ENCODE measurements at regions of chr9 and their contacts with region 1.

Region 1: GRCh38 chr9:130866474-130866965 is 30.1 kb downstream of the QRFP start:
- DNase-seq: peak; percentile 42
- H3K4me3 ChIP-seq: peak overlapping the region; percentile 45
- CTCF ChIP-seq: peak; percentile 84

Region 2: GRCh38 chr9:130693426-130694191 is 172.9 kb before region 1 on chr9 and contains the start of gene EXOSC2:
- CTCF ChIA-PET with region 1: interaction called, 786 read pairs
- POLR2A ChIA-PET with region 1: no interaction called
- DNase-seq: peak; percentile 88
- H3K4me3 ChIP-seq: peak within 1 kb of the TSS; percentile 86
- CTCF ChIP-seq: no peak

Region 3: GRCh38 chr9:130756037-130756436 is 110.5 kb before region 1 on chr9:
- CTCF ChIA-PET with region 1: interaction called, 18 read pairs
- POLR2A ChIA-PET with region 1: no interaction called
- DNase-seq: no peak
- H3K4me3 ChIP-seq: no peak overlapping the region
- CTCF ChIP-seq: no peak

Region 4: GRCh38 chr9:130824643-130825350 is 41.7 kb before region 1 on chr9:
- CTCF ChIA-PET with region 1: interaction called, 13 read pairs
- POLR2A ChIA-PET with region 1: no interaction called
- DNase-seq: no peak
- H3K4me3 ChIP-seq: peak overlapping the region; percentile 13; the same call in 1 of the 2 replicates
- CTCF ChIP-seq: no peak

Region 5: GRCh38 chr9:130884980-130885696 is 18.6 kb after region 1 on chr9:
- CTCF ChIA-PET with region 1: interaction called, 164 read pairs
- POLR2A ChIA-PET with region 1: no interaction called
- DNase-seq: no peak
- H3K4me3 ChIP-seq: no peak overlapping the region
- CTCF ChIP-seq: no peak

Region 6: DNA sequence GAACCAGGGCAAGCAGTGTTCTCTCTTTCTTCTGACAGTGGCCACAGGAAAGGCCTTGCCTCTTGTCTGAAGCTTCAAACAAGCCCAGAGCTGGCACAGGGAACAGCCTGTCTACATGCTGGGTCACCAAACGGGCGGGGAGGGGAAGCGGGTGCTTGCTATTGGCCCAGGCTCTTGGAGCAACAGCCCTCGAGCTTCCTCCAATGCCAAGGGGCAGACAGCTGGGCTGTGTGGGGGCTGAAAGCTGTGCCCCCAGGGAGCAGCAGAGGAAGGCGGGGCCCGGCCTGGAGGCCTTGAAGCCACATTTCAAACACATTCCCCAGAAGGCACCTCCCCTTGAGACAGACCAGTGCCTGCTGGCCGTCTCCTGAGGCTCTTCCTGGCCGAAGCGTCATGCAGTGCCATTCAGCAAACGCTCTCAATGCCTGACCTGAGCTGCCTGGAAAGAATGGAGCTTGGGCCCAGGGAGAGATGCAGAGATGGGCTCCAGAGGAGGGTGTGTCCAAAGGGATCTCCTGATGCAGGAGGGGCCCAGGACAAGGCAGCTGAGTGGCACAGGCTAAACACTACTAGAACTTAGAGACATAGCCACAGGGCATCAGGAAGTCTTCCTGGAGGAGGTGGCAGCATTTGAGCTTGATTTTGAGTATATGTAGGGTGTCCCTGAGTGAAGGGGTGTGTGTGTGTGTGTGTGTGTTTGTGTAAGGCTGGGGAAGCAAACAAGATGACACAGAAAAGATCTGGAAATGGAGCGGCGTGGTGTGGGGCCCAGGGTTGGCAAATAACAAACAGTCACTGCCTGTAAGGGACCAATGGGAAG is 70.0 kb after region 1 on chr9:
- CTCF ChIA-PET with region 1: interaction called, 24 read pairs
- POLR2A ChIA-PET with region 1: no interaction called
- DNase-seq: peak; percentile 34
- H3K4me3 ChIP-seq: no peak overlapping the region
- CTCF ChIP-seq: no peak

Region 7: DNA sequence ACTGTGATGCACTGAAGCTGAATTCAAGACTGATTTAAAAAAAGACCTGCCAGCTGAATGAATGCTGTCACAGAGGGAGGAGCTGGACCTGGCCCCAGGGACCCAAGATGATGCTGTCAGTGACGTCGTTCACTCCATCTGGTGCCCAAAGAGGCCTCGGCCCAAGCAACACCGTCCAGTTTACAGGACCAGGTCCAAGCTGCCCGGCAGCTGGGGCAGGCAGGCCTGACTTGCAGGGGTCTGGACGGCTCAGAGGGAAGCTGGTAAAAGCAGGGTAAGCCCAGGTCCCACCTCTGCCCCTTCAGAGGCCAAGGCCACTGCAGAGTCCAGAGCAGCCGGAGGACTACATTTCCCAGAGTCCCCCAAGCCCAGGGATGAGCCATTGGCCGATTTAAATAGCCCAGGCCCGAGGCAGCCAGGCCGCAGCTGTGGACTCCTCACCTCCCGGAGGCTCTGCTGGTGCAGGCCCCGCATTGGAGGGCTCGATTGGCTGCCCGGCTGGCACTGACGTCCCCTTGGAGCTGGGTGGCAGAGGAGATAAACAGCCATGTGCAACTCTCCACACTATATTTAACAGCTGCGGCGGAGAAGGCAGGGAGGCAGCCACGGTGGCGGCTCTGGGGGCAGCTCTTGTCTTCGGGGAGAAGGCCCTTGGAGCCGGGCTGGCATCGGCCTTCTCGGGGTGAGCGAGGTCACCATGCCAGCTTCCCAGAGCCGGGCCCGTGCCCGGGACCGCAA is 422.9 kb after region 1 on chr9 and contains the start of gene PLPP7:
- CTCF ChIA-PET with region 1: no interaction called
- POLR2A ChIA-PET with region 1: no interaction called
- DNase-seq: no peak
- H3K4me3 ChIP-seq: peak within 1 kb of the TSS; percentile 38
- CTCF ChIP-seq: no peak

Region 8: GRCh38 chr9:132049323-132049882 is 1182.9 kb after region 1 on chr9:
- CTCF ChIA-PET with region 1: no interaction called
- POLR2A ChIA-PET with region 1: no interaction called
- DNase-seq: no peak
- H3K4me3 ChIP-seq: no peak overlapping the region
- CTCF ChIP-seq: no peak

Measured in AG04449 (cell line).